Psoas muscle (tissue), 8 donors: ENCODE measurements at regions of chr12 and their contacts with region 1.

Region 1: GRCh38 chr12:103947871-103948555 is 17.7 kb upstream of the TDG start:
- DNase-seq: no peak
- ATAC-seq: no peak
- H3K4me3 ChIP-seq: no peak overlapping the region
- H3K27ac ChIP-seq: no peak overlapping the region
- H3K4me1 ChIP-seq: no peaks in the 10 kb centered on the region
- H3K27me3 ChIP-seq: no peaks in the 10 kb centered on the region
- CTCF ChIP-seq: no peak

Region 2: DNA sequence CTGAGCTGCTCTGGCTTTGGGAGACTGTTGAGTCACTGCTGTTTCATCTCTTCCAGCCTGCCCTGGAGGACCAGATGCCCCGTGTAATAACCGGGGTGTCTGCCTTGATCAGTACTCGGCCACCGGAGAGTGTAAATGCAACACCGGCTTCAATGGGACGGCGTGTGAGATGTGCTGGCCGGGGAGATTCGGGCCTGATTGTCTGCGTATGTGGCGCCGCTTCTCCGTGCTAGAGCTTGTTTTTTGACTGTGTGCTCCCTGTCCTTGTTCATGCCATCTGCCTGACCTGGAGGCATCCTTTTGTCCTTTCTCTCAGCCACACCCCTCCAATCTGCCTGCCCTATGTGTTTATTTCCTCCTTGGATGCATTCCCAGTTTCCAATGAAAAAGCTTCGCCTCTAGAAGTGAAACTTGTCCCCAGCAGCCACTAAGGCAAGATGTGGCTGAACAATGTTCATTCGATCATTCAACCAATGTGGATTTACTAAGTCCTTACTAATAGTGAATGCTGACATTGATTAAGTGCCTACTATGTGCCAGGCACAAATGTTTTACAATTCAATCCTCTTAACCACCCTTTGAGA is 205.6 kb before region 1 on chr12:
- intact Hi-C with region 1: no loop called
- DNase-seq: no peak
- ATAC-seq: no peak
- H3K4me3 ChIP-seq: no peak overlapping the region
- H3K27ac ChIP-seq: no peak overlapping the region
- H3K4me1 ChIP-seq: no peaks in the 10 kb centered on the region
- H3K27me3 ChIP-seq: no peaks in the 10 kb centered on the region
- CTCF ChIP-seq: no peak

Region 3: GRCh38 chr12:103986829-103987228 is 38.8 kb after region 1 on chr12:
- intact Hi-C with region 1: loop called in 1 of 2 experiments (anchors 5 kb)
- DNase-seq: no peak
- ATAC-seq: no peak
- H3K4me3 ChIP-seq: no peak overlapping the region
- H3K27ac ChIP-seq: no peak overlapping the region
- H3K4me1 ChIP-seq: no peaks in the 10 kb centered on the region
- H3K27me3 ChIP-seq: no peaks in the 10 kb centered on the region
- CTCF ChIP-seq: no peak

Region 4: DNA sequence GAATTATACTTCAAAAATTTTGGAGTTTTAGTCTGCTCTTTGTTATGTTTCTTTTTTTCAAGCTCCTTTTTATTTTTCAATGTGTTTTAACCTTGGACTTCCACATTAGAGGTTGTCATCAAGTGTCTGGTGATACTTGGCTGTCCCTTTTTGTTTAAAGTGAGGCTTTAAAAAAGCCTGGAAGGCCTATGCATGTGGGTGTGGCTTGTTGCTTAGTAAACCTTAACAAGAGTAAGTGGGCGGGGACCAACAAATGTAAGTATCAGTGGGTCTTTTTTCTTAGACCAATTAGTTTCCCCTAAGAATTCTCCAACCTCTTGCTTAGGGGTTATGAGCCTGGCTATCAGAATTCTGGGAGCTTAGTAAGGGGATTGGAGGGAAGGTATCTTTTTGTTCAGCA is 142.7 kb after region 1 on chr12:
- intact Hi-C with region 1: loop called in 1 of 2 experiments (anchors 5 kb)
- DNase-seq: no peak
- ATAC-seq: no peak
- H3K4me3 ChIP-seq: no peak overlapping the region
- H3K27ac ChIP-seq: no peak overlapping the region
- H3K4me1 ChIP-seq: no peaks in the 10 kb centered on the region
- H3K27me3 ChIP-seq: no peaks in the 10 kb centered on the region
- CTCF ChIP-seq: no peak

Region 5: DNA sequence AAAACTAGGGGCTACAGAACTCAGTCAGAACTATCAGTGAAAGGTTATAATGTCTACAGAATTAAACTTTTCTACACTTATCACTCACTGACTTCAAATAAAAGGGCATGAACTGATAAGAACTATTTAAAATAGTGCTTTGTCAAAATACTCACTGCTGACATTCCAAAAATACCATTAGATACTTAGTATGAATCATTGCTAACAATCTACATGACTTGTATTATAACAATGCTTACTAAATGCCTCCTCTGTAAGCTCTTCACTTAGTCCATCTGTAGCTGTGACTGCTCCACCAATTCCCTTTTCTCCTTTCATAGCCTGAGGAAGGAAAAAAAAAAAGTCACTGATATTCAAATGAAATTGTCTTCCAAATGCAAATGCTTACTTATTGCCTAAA is 173.0 kb after region 1 on chr12:
- intact Hi-C with region 1: no loop called
- DNase-seq: no peak
- ATAC-seq: peak in 1 of 4 donors; percentile 49
- H3K4me3 ChIP-seq: no peak overlapping the region
- H3K27ac ChIP-seq: no peak overlapping the region
- H3K4me1 ChIP-seq: no peaks in the 10 kb centered on the region
- H3K27me3 ChIP-seq: no peaks in the 10 kb centered on the region
- CTCF ChIP-seq: no peak

Region 6: GRCh38 chr12:104329707-104330532 is 381.9 kb after region 1 on chr12:
- intact Hi-C with region 1: loop called in 1 of 2 experiments (anchors 10 kb)
- DNase-seq: no peak
- ATAC-seq: peak in 1 of 4 donors; percentile 7
- H3K4me3 ChIP-seq: no peak overlapping the region
- H3K27ac ChIP-seq: no peak overlapping the region
- H3K4me1 ChIP-seq: no peaks in the 10 kb centered on the region
- H3K27me3 ChIP-seq: no peaks in the 10 kb centered on the region
- CTCF ChIP-seq: no peak

Region 7: GRCh38 chr12:105141320-105141918 is 1193.4 kb after region 1 on chr12:
- intact Hi-C with region 1: loop called in 1 of 2 experiments (anchors 10 kb)
- DNase-seq: no peak
- ATAC-seq: no peak
- H3K4me3 ChIP-seq: no peak overlapping the region
- H3K27ac ChIP-seq: no peak overlapping the region
- H3K4me1 ChIP-seq: no peaks in the 10 kb centered on the region
- H3K27me3 ChIP-seq: no peaks in the 10 kb centered on the region
- CTCF ChIP-seq: no peak